Endothelial cell of umbilical vein (primary cell): ENCODE measurements at regions of chr9 and their contacts with region 1.

Region 1: DNA sequence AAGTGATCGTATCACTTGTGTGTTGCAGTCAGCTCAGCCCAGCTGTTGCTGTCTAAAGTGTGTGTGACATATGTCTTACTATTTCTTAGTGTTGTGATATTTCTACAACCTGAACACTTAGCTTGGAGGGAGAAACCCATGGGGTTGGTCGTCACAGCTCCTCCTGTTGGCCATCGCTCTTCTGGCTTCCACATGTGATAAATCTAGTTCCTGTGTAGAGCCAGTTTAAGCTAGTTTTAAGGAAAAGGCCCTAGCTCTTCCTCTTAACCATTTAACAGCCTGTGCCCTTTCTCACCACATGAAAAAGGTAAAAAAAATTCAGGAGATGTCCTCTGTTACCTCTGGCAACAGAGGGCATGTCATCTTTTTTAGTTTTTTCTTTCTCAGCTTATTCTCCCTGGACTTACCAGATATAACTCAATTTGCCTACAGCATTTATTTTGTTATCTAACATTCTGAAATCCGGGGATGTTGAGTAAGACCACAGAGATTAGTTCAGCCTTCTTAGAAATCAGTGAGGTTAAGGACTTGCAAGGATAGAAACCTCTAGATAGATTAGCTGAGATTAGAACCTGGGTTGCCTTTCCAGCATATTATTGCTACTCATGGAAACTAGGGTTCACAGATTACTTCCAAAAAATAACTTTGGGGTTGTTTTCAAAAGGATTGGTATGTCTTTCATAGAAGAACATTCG is 100.4 kb downstream of the GAPVD1 start:
- DNase-seq: peak; percentile 13
- H3K4me3 ChIP-seq: no peak overlapping the region
- H3K27ac ChIP-seq: no peak overlapping the region
- H3K4me1 ChIP-seq: no peaks in the 10 kb centered on the region
- H3K27me3 ChIP-seq: no peaks in the 10 kb centered on the region
- CTCF ChIP-seq: peak in 1 of 2 donors; percentile 24
- POLR2A ChIP-seq: no peak

Region 2: DNA sequence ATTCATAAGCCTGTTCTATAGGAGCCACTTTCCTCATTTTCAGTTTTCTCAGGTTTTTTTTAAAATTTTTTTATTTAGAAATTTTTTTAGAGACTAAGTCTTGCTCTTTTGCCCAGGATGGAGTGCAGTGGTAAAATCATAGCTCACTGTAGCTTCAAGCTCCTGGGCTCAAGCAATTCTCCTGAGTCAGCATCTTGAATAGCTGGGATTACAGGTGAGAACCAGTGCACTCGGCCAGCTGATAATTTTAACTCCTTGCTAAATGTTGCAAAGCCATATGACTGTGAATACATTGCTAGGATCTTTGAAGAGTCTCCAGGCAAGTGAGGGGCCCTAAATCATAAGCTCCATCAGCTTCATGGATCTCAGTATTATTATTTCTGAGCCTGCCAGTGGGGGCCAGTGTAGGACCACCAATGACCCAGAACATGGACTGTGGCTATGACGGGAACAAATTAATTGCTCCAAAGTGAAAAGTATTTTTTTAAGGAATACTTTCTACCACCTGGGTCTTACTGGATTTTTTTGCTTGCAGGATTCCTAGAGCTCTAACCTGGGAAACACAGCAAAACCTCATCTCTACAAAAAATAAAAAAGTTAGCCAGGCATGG is 106.1 kb before region 1 on chr9:
- CTCF ChIA-PET with region 1: interaction called, 40 read pairs
- POLR2A ChIA-PET with region 1: no interaction called
- dilution Hi-C with region 1: no loop called
- intact Hi-C with region 1: loop called (anchors 1 kb)
- DNase-seq: no peak
- H3K4me3 ChIP-seq: no peak overlapping the region
- H3K27ac ChIP-seq: no peak overlapping the region
- H3K4me1 ChIP-seq: no peaks in the 10 kb centered on the region
- H3K27me3 ChIP-seq: no peaks in the 10 kb centered on the region
- CTCF ChIP-seq: peak; percentile 20 to 47
- POLR2A ChIP-seq: no peak